ENCODE measurements at regions of chr6 and their contacts with region 1.

Region 1: DNA sequence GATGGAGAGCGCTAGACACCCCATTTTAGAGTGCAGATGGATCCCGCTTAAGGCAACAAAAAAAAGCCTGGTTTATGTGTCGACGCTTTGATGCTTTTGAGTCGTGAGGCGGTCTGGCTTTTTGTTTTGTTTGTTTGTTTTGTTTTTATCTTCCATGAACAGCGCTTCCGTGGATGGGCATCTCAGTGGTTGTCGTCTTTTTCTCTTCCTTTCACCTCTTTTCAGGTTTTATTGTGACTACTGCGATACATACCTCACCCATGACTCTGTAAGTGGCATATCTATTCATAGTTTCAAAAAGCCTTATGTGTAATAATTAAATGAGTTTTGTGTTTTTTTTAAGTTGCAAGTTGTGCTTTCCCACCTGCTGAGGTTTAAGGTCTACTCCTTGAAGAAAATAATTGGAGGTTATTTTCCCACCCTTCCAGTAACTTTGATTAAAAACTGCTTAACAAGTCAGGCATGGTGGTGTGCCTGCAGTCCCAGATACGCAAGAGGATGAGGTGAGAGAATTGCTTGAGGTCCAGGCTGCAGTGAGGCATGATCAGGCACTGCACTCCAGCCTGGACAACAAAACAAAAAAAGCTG is 476 bp downstream of the SNRPC start:
- DNase-seq: no peak
- H3K4me3 ChIP-seq: peak overlapping the region; percentile 81 to 98 (median 95)
- H3K27ac ChIP-seq: peak overlapping the region; percentile 92
- H3K4me1 ChIP-seq: no peaks in the 10 kb centered on the region
- H3K27me3 ChIP-seq: no peaks in the 10 kb centered on the region
- CTCF ChIP-seq: no peak
- EP300 ChIP-seq: no peak
- POLR2A ChIP-seq: no peak; a peak in 1 of 3 replicates
- RAD21 ChIP-seq: no peak

Region 2: GRCh38 chr6:34771727-34772126 is 13.9 kb after region 1 on chr6:
- CTCF ChIA-PET with region 1: interaction called, 3 read pairs
- POLR2A ChIA-PET with region 1: interaction called, 27 read pairs
- DNase-seq: peak in 1 of 2 experiments; percentile 5
- H3K4me3 ChIP-seq: no peak overlapping the region
- H3K27ac ChIP-seq: no peak overlapping the region
- H3K4me1 ChIP-seq: no peaks in the 10 kb centered on the region
- H3K27me3 ChIP-seq: no peaks in the 10 kb centered on the region
- CTCF ChIP-seq: no peak
- EP300 ChIP-seq: no peak
- POLR2A ChIP-seq: no peak
- RAD21 ChIP-seq: no peak

Measured in H1 (cell line).